Activated B cell treated with CpG ODN at 0.5 μM for 24 hours (primary cell): ENCODE measurements at regions of chr7 and their contacts with region 1.

Region 1: GRCh38 chr7:106100863-106101629 is 11.1 kb downstream of the SYPL1 start:
- DNase-seq: no peak
- ATAC-seq: no peak
- H3K4me3 Mint-ChIP-seq: peak overlapping the region; percentile 2
- H3K27ac Mint-ChIP-seq: peak overlapping the region; percentile 83
- H3K4me1 Mint-ChIP-seq: peaks cover 82% of the 10 kb centered on the region
- H3K27me3 Mint-ChIP-seq: no peaks in the 10 kb centered on the region
- CTCF ChIP-seq: no peak

Region 2: GRCh38 chr7:106071356-106071998 is 29.6 kb before region 1 on chr7:
- CTCF ChIA-PET with region 1: interaction called, 19 read pairs
- POLR2A ChIA-PET with region 1: interaction called, 14 read pairs
- intact Hi-C with region 1: no loop called
- DNase-seq: peak; percentile 57
- ATAC-seq: peak; percentile 87
- H3K4me3 Mint-ChIP-seq: peak overlapping the region; percentile 73
- H3K27ac Mint-ChIP-seq: peak overlapping the region; percentile 98
- H3K4me1 Mint-ChIP-seq: peaks cover 100% of the 10 kb centered on the region
- H3K27me3 Mint-ChIP-seq: no peaks in the 10 kb centered on the region
- CTCF ChIP-seq: no peak

Region 3: DNA sequence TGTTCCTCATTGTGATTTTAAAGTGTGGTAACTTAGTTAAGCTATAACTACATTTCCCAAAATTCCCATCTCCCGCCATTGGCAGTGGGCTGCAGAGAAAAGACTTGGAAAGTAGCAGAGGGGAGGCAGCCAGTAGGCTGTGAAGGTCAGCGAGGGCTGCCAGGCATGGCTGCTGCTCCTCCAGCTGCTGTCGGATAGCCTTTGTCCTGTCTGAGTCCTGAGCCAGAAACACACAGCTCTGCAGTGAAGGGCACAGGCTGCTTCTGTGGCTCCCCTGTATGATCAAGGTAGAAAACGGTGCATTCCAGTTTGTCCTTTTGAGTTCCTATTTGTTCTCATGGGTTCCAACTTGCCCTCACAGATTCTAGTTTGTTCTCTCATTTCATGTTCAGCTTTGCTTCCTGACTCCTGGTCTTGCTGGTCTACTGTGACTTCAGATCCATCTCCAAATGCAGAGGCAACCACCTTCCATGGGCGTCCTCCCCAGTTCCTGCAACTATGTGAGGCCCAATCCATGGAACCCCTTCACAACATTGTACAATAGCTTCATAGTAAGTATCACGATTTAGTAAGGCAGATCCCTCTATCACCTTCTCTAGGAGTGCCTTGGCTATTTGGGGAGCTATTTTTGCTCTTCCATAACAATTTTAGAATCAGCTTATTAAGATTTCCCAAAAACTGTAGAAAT is 20.6 kb before region 1 on chr7:
- CTCF ChIA-PET with region 1: no interaction called
- POLR2A ChIA-PET with region 1: interaction called, 16 read pairs
- intact Hi-C with region 1: no loop called
- DNase-seq: no peak
- ATAC-seq: no peak
- H3K4me3 Mint-ChIP-seq: no peak overlapping the region
- H3K27ac Mint-ChIP-seq: peak overlapping the region; percentile 69
- H3K4me1 Mint-ChIP-seq: peaks cover 89% of the 10 kb centered on the region
- H3K27me3 Mint-ChIP-seq: no peaks in the 10 kb centered on the region
- CTCF ChIP-seq: no peak

Region 4: DNA sequence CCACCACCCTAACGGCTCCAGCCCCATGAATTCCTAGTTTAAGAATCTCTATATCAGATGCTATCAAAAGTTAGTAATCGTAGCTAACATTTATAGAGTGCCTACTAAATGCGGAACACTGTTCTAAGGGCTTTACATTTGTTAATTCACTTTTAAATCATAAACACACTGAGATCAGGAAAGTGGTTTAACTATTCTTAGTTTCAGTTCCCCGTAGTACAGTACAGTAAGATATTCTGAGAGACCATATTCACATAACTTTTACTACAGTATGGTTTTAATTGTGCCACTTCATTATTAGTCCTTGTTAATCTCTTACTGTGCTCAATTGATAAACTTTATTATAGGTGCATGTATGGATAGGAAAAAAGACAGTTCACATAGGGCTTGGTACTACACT is 11.4 kb before region 1 on chr7:
- CTCF ChIA-PET with region 1: interaction called, 9 read pairs
- POLR2A ChIA-PET with region 1: interaction called, 6 read pairs
- intact Hi-C with region 1: loop called (anchors 1 kb)
- DNase-seq: no peak
- ATAC-seq: peak; percentile 88
- H3K4me3 Mint-ChIP-seq: peak overlapping the region; percentile 65
- H3K27ac Mint-ChIP-seq: peak overlapping the region; percentile 83
- H3K4me1 Mint-ChIP-seq: peaks cover 82% of the 10 kb centered on the region
- H3K27me3 Mint-ChIP-seq: no peaks in the 10 kb centered on the region
- CTCF ChIP-seq: no peak